Endothelial cell of umbilical vein (primary cell): ENCODE measurements at regions of chr2 and their contacts with region 1.

Region 1: DNA sequence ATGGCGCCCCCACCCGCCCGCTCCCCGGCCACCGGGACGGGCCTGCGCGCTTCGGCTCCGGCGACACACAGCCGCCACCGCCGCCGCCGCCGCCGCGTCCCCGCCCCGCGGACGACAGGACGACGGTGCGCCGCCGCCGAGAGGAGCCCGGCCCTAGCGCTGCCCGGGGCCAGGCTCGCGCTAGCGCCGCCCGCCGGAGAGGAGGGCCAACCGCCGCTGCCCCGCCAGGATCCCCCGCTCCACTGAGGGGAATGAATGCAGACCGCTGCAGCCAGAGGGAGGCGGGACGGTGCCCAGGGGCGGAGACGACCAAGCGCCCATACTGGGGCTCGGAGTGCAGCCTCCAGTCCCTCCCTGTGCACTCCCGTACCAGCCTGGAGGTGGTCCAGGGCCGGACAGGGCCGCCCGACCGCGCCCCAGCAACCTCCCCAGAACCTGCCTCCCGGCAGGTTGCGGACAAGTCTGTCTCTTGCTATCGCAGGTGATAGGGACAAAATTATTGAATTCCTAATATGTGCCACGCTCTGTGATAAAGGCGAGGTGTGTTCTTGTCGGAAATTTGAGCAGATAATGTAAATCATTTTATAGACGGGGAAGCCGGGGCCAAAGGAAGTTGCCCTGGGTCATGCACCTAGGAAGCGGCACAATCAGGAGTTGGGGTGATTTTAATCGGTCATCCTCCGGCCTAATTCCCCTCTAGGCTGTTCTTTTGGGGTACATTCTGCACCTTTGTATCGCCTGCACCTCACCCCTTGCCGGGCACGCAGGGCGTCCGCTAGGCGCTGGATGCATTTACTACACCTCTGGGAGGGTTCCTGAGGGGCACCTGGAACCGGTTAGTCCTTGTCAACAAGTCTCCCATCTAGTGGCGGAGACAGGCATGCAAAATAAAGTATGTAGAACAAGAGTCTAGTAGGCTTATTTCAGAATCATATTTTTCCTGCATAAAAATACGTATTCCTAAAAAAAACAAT is at the start of gene TEX261:
- DNase-seq: peak; percentile 92
- H3K4me3 ChIP-seq: peak within 1 kb of the TSS; percentile 73 to 97 (median 75)
- H3K27ac ChIP-seq: peak within 1 kb of the TSS; percentile 32
- H3K4me1 ChIP-seq: peaks cover 20% of the 10 kb centered on the region
- H3K27me3 ChIP-seq: no peaks in the 10 kb centered on the region
- CTCF ChIP-seq: peak; percentile 81 to 82
- POLR2A ChIP-seq: peak; percentile 66
- total RNA-seq, gene TEX261: 63.3 and 71.2 TPM in 2 replicates

Region 2: GRCh38 chr2:70887550-70888246 is 107.3 kb before region 1 on chr2:
- CTCF ChIA-PET with region 1: no interaction called
- POLR2A ChIA-PET with region 1: no interaction called
- dilution Hi-C with region 1: no loop called
- intact Hi-C with region 1: no loop called
- DNase-seq: no peak
- H3K4me3 ChIP-seq: peak overlapping the region in 1 of 3 experiments; percentile 11
- H3K27ac ChIP-seq: no peak overlapping the region
- H3K4me1 ChIP-seq: peaks cover 8% of the 10 kb centered on the region
- H3K27me3 ChIP-seq: peaks cover 82 to 100% of the 10 kb centered on the region in 2 experiments
- CTCF ChIP-seq: no peak
- POLR2A ChIP-seq: no peak

Region 3: GRCh38 chr2:70977605-70978205 is 17.3 kb before region 1 on chr2:
- CTCF ChIA-PET with region 1: interaction called, 4 read pairs
- POLR2A ChIA-PET with region 1: no interaction called
- dilution Hi-C with region 1: no loop called
- intact Hi-C with region 1: loop called (anchors 2 kb)
- DNase-seq: peak; percentile 35
- H3K4me3 ChIP-seq: peak overlapping the region in 1 of 3 experiments; percentile 56
- H3K27ac ChIP-seq: peak overlapping the region; percentile 85
- H3K4me1 ChIP-seq: peaks cover 13% of the 10 kb centered on the region
- H3K27me3 ChIP-seq: peaks cover 5 to 6% of the 10 kb centered on the region in 2 experiments
- CTCF ChIP-seq: no peak
- POLR2A ChIP-seq: no peak

Region 4: DNA sequence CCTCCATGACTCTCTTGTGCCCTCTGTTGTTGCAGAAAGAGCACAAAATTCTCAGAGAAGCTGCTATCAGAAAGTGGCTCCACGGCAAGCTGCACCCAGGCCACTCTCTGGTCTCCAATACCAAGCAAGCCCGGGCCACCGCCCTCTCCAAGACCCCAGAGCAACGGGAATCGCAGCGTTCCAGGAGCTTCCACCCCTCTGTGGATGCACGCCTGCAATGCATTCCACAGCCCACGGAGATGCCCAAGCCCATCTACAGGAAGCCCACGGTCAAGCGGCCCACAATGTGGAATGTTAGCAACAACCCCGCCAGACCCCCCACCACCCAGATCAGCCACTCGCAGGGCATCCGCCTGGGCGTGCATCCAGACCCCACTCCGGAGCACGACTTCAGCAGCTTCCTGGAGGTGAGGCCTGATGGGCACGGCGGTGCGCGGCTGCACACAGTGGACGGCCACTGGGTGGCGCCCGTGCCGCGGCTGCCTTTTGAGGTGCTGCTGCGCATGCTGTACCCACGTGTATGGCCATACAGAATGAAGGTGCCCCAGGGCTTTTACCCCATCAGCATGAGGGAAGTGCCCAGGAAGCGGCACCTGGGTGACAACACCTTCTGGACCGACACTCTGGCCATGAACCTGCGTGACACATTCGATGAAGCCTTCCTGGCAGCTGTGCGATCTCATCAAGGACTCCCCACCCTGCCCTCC is 10.3 kb before region 1 on chr2:
- CTCF ChIA-PET with region 1: interaction called, 43 read pairs
- POLR2A ChIA-PET with region 1: no interaction called
- dilution Hi-C with region 1: no loop called
- intact Hi-C with region 1: loop called (anchors 1 kb)
- DNase-seq: peak; percentile 58
- H3K4me3 ChIP-seq: no peak overlapping the region
- H3K27ac ChIP-seq: no peak overlapping the region
- H3K4me1 ChIP-seq: no peaks in the 10 kb centered on the region
- H3K27me3 ChIP-seq: no peaks in the 10 kb centered on the region
- CTCF ChIP-seq: peak; percentile 94 to 96
- POLR2A ChIP-seq: no peak

Region 5: DNA sequence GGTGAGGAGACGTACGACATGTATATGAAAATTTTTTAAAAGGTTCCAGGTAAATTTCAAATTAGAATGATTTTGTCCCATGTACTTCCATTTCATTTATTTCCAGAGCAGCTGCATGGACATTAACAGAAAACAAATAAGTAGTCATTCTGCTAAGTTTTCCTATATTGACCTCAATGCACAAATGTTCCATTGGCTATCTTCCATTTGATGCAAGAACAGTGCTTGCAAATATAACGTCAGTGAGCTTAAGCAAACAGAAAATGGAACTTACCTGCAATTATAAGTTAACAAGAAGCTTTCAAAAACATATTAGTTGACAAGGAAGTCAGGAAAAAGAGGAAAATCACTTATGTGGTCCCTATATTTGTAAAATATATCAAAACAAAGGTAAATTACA is 215.2 kb after region 1 on chr2:
- CTCF ChIA-PET with region 1: no interaction called
- POLR2A ChIA-PET with region 1: no interaction called
- dilution Hi-C with region 1: no loop called
- intact Hi-C with region 1: no loop called
- DNase-seq: no peak
- H3K4me3 ChIP-seq: no peak overlapping the region
- H3K27ac ChIP-seq: no peak overlapping the region
- H3K4me1 ChIP-seq: no peaks in the 10 kb centered on the region
- H3K27me3 ChIP-seq: peaks cover 10 to 30% of the 10 kb centered on the region in 2 experiments
- CTCF ChIP-seq: no peak
- POLR2A ChIP-seq: no peak

Region 6: DNA sequence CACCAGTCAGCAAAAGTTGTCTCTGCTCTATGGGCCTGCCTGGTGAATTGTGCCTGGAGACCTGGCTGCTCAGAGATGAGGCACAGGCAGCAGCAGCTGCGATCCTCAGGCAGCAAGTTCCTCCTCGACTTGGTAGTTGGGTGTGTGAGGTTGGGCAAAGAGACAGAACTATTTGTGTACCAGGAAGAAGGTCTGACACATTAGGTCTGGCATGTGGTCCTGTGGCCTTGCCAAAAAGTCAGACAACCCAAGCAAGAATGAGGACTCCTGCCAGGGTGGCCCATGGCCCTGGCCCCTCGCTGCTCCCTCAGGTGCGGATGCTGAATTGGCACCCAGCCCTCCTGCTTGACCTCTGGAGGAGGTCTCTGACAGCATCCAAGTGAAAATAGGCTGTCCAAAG is 651.0 kb after region 1 on chr2:
- CTCF ChIA-PET with region 1: no interaction called
- POLR2A ChIA-PET with region 1: no interaction called
- dilution Hi-C with region 1: no loop called
- intact Hi-C with region 1: no loop called
- DNase-seq: no peak
- H3K4me3 ChIP-seq: no peak overlapping the region
- H3K27ac ChIP-seq: no peak overlapping the region
- H3K4me1 ChIP-seq: no peaks in the 10 kb centered on the region
- H3K27me3 ChIP-seq: no peaks in the 10 kb centered on the region
- CTCF ChIP-seq: no peak
- POLR2A ChIP-seq: no peak